ENCODE measurements at regions of chr5 and their contacts with region 1.

Region 1: DNA sequence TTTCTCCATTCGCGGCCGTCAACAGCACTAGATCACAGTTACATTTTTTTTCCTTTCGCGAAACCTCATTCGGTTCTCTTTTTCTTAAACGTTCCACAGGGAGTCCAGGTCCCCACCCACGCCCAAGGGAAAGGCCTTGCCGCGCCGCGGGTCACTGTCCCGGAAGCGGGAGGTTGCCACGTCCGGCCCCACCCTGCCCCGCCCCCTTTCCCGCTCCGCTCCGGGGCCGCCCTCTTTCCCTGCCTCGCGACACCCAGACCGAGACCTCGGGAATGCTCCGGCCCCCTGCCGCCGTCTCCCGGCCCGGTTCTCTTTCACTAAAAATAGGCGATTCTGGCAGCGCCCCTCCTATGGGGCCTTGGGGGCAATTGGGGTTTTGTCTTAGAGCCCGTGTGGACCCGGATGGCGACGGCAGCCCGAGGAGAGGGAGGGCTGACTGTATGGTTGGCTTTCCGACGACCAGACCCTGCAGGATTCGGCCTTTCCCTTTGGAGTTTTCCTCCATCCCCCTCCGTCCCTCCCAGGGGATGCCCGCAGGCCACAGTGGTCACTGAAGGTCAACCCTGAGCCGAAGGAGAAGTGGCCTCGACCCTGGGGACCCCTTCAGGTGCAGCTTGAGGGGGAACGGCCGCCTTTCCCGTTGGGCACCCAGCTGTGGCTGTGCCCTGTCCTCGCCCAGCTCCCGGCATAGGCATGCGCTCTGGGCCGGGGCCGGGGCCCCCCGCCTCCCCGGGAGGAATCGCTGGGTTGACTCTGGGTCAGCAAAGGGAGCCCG is 2.8 kb upstream of the RACK1 start:
- DNase-seq: peak; percentile 89
- CTCF ChIP-seq: no peak

Region 2: GRCh38 chr5:181109489-181110013 is 136.9 kb before region 1 on chr5:
- CTCF ChIA-PET with region 1: no interaction called
- POLR2A ChIA-PET with region 1: no interaction called
- DNase-seq: no peak
- CTCF ChIP-seq: no peak

Region 3: GRCh38 chr5:181260387-181261319 is 14.2 kb after region 1 on chr5 and contains the start of gene TRIM52:
- CTCF ChIA-PET with region 1: interaction called, 10 read pairs
- POLR2A ChIA-PET with region 1: interaction called, 4 read pairs
- DNase-seq: peak; percentile 90
- CTCF ChIP-seq: no peak